Activated CD8-positive, alpha-beta memory T cell treated with anti-CD3 and anti-CD28 coated beads, Interleukin-2, amount 10 ng/mL, durations not matched to agents 7 days and 5 days (primary cell): ENCODE measurements at regions of chr20 and their contacts with region 1.

Region 1: GRCh38 chr20:51372176-51372803 is 170.2 kb downstream of the NFATC2 start:
- DNase-seq: peak; percentile 68
- ATAC-seq: peak; percentile 85
- H3K4me3 Mint-ChIP-seq: no peak overlapping the region
- H3K27ac Mint-ChIP-seq: no peak overlapping the region
- H3K4me1 Mint-ChIP-seq: peaks cover 25% of the 10 kb centered on the region
- H3K27me3 Mint-ChIP-seq: no peaks in the 10 kb centered on the region

Region 2: DNA sequence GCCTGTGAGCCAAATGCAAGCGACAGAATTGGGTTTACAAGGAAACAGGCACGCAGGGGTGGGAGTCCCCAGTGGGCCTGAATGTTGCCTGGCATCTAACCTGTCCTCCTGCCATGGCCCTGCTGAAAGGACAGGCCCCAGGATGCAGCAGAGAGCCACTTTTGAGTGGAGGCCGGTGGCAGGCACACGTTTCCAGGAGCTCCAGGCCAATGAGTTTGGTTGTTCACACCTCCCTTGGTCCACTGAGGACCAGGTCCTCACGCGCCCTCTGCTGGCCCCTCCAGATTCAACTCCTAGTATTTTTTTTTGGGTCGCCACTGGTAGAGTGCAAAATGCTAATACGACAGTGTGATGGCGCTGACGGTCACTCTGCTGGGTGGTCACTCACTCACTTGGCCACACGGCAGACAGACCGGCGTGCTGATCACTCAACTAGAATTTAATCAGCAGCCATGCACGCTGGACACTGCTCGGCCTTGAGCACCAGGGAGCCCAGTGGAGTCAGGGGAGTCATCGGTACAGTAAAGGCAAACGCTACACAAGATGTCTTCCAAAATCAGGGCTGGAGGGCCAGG is 252.0 kb after region 1 on chr20:
- CTCF ChIA-PET with region 1: interaction called, 23 read pairs
- DNase-seq: peak; percentile 77
- ATAC-seq: peak; percentile 71
- H3K4me3 Mint-ChIP-seq: no peak overlapping the region
- H3K27ac Mint-ChIP-seq: no peak overlapping the region
- H3K4me1 Mint-ChIP-seq: peaks cover 22% of the 10 kb centered on the region
- H3K27me3 Mint-ChIP-seq: peaks cover 4% of the 10 kb centered on the region